RWPE1 (cell line): ENCODE measurements at regions of chr14 and their contacts with region 1.

Region 1: GRCh38 chr14:30270200-30271161 is 288.5 kb upstream of the G2E3 start:
- DNase-seq: peak; percentile 64
- H3K27ac ChIP-seq: no peak overlapping the region
- CTCF ChIP-seq: peak; percentile 89

Region 2: DNA sequence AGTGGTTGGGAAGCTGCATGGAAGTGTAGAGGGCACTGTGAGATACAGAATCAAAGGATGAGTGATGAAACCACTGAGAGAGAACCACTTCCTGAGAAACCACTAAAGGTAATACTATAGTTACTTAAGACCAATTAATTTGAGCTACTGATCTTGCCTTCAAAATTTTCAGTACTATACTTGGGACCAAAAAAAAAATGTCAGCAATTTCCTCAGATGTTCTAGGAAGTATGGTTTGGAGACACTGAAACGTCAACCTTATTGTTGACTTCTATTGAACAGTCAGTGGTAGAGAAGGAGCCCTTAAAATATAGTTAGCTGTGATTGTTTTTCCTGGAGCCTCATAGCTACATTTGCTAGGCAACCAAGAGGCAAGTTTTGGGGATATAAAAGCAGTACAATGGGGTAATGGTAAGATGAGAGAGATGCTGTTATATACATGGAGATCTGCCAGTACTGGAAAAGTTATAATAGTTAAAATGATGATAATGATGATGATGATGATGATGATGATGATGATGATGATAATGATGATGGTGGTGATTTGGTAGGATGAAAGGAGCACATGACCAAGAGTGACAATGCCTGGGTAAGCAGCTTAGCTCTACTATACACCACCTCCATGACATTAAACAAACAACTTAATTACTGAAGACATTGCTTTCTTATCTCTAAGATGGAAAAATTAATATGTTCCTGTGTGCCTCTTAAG is 12.4 kb before region 1 on chr14:
- CTCF ChIA-PET with region 1: interaction called, 18 read pairs
- POLR2A ChIA-PET with region 1: no interaction called
- DNase-seq: no peak
- H3K27ac ChIP-seq: no peak overlapping the region
- CTCF ChIP-seq: no peak

Region 3: DNA sequence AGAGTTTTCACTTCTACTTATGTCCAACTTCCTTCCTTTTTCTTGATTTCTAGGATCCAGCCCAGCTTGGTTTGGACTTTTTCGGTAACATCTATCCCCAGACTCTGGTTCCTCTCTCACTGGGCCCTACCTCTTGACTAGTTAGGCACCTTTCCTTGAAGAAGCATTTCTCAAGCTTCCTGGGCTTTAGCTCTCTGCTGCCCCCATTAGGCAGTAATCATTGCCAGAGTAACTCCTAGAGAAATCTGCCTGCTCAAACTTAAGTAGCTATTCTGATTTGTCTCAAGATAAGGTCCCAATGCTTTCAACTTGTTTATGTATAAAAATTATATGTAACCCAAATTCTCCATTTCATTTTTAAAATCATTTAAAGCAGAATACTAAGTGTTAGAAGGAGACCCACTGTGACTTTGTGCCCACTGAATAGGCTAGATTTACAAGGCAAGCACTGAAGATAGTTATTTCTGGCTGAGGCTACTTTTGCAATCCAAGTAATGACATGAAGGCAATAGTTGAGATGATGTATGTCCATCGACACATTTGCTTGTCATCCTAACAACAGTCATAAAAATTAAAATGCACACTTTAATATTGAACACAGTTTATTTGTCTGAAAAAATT is 13.5 kb after region 1 on chr14:
- CTCF ChIA-PET with region 1: interaction called, 28 read pairs
- POLR2A ChIA-PET with region 1: no interaction called
- DNase-seq: peak; percentile 28
- H3K27ac ChIP-seq: no peak overlapping the region
- CTCF ChIP-seq: peak; percentile 75

Region 4: GRCh38 chr14:30656190-30656632 is 385.7 kb after region 1 on chr14:
- CTCF ChIA-PET with region 1: no interaction called
- POLR2A ChIA-PET with region 1: no interaction called
- DNase-seq: peak; percentile 34
- H3K27ac ChIP-seq: no peak overlapping the region
- CTCF ChIP-seq: peak; percentile 78